ENCODE measurements at regions of chr6 and their contacts with region 1.

Region 1: DNA sequence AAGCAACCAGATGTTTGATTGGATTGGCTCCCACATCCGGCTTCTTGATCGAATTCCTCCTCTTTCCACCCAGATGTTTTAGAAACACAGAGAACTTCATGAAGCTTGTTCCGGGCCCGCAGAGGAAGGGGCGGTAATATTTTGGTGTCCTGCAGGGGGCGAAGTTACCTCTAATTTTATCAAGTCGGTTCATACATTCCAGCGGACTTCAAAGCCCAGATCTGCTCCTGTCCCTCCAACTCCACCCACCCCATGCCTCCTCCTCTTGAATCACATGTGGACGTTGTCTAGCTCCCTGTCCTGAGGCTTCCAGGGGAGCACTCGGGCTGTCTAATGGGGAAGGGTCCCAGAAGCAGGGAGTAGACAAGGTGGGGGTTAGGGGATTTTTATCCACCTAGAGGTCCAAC is 2.9 kb upstream of the BMP6 start:
- DNase-seq: peak; percentile 55 to 83
- ATAC-seq: peak; percentile 29

Region 2: DNA sequence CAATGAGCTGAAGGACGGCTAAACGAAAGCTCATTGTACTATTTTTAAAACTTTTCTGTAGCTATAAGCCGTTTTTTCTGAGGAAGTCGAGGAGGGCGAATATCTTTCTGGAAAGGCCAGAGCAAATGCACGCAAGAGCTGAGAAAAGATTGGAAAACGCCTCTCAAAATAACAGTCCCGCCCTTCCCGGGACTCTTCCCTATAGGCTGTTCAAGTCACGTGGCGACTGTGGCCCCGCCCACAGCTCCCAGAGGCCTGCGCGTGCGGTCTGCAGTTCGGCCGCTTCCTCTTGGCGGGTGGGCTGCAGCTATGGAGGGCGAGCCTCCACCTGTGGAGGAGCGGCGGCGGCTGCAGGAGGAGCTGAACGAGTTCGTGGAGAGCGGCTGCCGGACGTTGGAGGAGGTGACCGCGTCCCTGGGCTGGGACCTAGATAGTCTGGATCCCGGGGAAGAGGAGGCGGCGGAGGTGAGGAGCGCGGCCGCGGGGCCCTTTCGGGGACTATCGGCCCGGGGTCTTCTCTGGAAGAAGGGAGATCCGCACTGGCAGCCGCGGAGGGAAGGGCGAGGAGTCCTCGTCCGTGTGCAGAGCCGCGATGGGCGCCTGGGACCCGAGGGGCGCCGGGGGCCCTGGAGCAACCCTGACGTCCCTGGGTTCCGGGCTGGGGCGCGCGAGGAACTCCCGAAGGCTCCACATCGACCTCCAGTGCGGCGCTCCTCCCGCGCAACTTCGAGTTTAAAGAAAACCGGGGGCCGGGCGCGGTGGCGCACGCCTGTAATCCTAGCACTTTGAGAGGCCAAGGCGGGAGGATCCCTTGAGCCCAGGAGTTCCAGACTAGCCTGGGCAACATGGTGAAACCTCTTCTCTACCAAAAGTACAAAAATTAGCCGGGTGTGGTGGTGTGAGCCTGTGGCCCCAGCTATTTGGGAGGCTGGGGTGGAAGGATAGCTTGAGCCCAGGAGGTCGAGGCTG is 132.8 kb before region 1 on chr6 and contains the start of gene SNRNP48:
- intact Hi-C with region 1: no loop called
- DNase-seq: peak; percentile 96 to 99
- ATAC-seq: peak; percentile 86
- total RNA-seq, gene SNRNP48: 11.1 to 11.6 TPM

Region 3: GRCh38 chr6:8006208-8006607 is 283.2 kb after region 1 on chr6:
- intact Hi-C with region 1: loop called in 1 of 2 experiments (anchors 5 kb)
- DNase-seq: no peak
- ATAC-seq: peak; percentile 45